Head of caudate nucleus (tissue), 42 donors: ENCODE measurements at regions of chr3 and their contacts with region 1.

Region 1: DNA sequence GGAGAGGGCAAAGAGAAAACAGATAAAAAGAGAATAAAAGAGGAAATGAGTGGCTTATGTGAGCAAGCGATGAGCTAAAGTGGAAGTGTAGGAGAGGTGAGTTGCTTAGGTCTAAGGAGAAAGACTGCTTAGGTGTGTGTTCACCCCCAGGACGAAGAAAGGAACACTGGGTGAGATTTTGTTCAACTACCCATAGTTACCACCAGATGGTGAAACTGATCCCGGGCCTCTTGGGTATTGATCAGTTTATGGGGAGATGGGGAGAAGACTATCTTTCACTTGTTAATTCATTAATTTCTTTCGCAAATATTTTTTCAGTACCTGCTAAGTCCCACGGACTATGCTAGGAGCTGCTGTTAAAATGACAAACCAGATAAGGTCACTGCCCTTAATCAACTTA is 33.9 kb downstream of the GAP43 start:
- DNase-seq: no peak

Region 2: GRCh38 chr3:115615001-115615814 is 42.0 kb before region 1 on chr3:
- intact Hi-C with region 1: no loop called
- DNase-seq: no peak

Region 3: GRCh38 chr3:115627180-115628074 is 29.7 kb before region 1 on chr3:
- intact Hi-C with region 1: loop called (anchors 2 kb)
- DNase-seq: no peak